B cell (primary cell): ENCODE measurements at regions of chr10 and their contacts with region 1.

Region 1: GRCh38 chr10:110944792-110945396 is 25.5 kb downstream of the SHOC2 start:
- DNase-seq: no peak
- ATAC-seq: no peak
- H3K4me3 ChIP-seq: no peak overlapping the region
- H3K4me3 Mint-ChIP-seq: peak overlapping the region; percentile 5
- H3K27ac ChIP-seq: no peak overlapping the region
- H3K27ac Mint-ChIP-seq: peak overlapping the region; percentile 21
- H3K4me1 ChIP-seq: peaks cover 13 to 29% of the 10 kb centered on the region in 2 donors
- H3K4me1 Mint-ChIP-seq: peaks cover 58% of the 10 kb centered on the region
- H3K27me3 ChIP-seq: no peaks in the 10 kb centered on the region
- H3K27me3 Mint-ChIP-seq: no peaks in the 10 kb centered on the region
- CTCF ChIP-seq: no peak

Region 2: DNA sequence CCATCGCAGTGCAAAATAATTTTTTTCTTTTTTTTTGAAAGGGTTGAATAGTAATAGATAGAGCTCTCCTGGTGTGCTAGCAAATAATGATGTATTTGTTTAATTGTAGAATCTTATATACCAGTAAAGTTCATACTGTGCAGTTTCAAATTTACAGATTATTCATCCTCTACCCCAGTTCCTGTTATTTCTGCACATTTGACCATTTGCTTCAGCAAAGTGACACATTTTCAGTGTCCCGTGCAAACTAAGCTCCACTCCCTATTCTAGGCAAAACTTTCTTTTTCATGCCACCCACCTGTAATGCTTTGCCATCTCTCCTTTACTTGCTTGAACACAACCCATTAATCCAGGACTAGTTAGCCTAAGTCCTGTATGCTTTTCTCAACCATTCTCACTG is 17.5 kb after region 1 on chr10:
- CTCF ChIA-PET with region 1: interaction called, 5 read pairs
- POLR2A ChIA-PET with region 1: no interaction called
- intact Hi-C with region 1: loop called (anchors 2 kb)
- DNase-seq: no peak
- ATAC-seq: no peak
- H3K4me3 ChIP-seq: no peak overlapping the region
- H3K4me3 Mint-ChIP-seq: no peak overlapping the region
- H3K27ac ChIP-seq: no peak overlapping the region
- H3K27ac Mint-ChIP-seq: no peak overlapping the region
- H3K4me1 ChIP-seq: peaks cover 0 to 30% of the 10 kb centered on the region in 2 donors
- H3K4me1 Mint-ChIP-seq: peaks cover 71% of the 10 kb centered on the region
- H3K27me3 ChIP-seq: no peaks in the 10 kb centered on the region
- H3K27me3 Mint-ChIP-seq: no peaks in the 10 kb centered on the region
- CTCF ChIP-seq: no peak